ENCODE measurements at regions of chr7 and their contacts with region 1.

Region 1: DNA sequence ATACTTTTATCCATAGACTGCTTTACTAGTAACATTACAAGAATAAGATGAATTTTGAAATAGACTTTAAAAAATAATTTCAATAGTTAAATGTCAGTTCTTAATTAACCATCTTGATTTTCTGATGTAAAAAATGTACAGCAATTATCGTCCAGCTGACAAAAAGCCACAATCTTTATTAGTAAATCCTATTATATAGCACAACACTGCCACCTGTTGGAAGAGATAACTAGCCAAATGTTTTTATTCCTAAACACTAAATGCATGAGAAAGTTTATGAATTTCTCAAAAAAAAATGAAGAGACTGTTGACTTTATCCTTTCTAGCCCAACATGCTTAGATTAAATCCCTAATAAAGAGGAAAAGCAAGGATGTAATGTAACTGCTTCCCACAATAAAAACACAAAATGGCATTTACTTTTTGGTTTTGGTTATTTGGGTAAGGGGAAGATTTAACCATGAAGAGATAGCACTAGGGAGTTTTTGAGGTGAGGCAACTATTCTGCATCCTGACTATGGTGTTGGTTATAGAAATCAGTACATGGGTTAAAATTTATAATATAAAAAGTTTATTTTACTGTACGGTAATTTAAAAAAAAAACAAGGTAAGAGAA is 8.0 kb downstream of the COA1 start:
- DNase-seq: no peak
- ATAC-seq: no peak
- H3K4me3 ChIP-seq: no peak overlapping the region
- H3K27ac ChIP-seq: no peak overlapping the region
- H3K4me1 ChIP-seq: no peaks in the 10 kb centered on the region
- H3K27me3 ChIP-seq: no peaks in the 10 kb centered on the region

Region 2: DNA sequence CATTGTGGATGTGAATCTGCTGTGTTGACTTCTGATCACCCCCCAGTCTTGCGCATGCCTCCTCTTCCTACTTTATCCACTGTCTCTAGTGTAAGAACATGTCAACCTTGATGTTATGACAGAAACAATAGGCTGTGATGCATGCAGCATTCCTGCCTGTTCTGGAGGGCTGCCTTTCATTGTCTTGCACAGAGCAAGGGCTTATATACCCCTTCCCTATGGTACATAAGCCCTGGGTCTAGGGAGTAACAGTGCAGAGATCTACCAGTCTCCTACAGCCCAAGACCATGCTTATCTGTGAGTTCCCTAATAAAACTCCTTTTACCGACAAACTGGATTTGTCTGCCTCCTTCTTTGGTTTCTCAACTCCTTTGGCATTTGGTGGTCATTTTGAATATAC is 315.4 kb before region 1 on chr7:
- intact Hi-C with region 1: no loop called
- DNase-seq: no peak
- ATAC-seq: no peak
- H3K4me3 ChIP-seq: no peak overlapping the region
- H3K27ac ChIP-seq: no peak overlapping the region
- H3K4me1 ChIP-seq: no peaks in the 10 kb centered on the region
- H3K27me3 ChIP-seq: no peaks in the 10 kb centered on the region

Region 3: GRCh38 chr7:43439631-43440401 is 281.5 kb before region 1 on chr7:
- intact Hi-C with region 1: no loop called
- DNase-seq: no peak
- ATAC-seq: no peak
- H3K4me3 ChIP-seq: no peak overlapping the region
- H3K27ac ChIP-seq: no peak overlapping the region
- H3K4me1 ChIP-seq: no peaks in the 10 kb centered on the region
- H3K27me3 ChIP-seq: no peaks in the 10 kb centered on the region

Region 4: GRCh38 chr7:43522406-43523156 is 198.7 kb before region 1 on chr7:
- intact Hi-C with region 1: no loop called
- DNase-seq: no peak
- ATAC-seq: no peak
- H3K4me3 ChIP-seq: no peak overlapping the region
- H3K27ac ChIP-seq: no peak overlapping the region
- H3K4me1 ChIP-seq: no peaks in the 10 kb centered on the region
- H3K27me3 ChIP-seq: no peaks in the 10 kb centered on the region

Region 5: GRCh38 chr7:43700059-43700501 is 21.2 kb before region 1 on chr7:
- intact Hi-C with region 1: loop called in 1 of 2 experiments (anchors 2 kb)
- DNase-seq: no peak
- ATAC-seq: peak; percentile 85
- H3K4me3 ChIP-seq: no peak overlapping the region
- H3K27ac ChIP-seq: no peak overlapping the region
- H3K4me1 ChIP-seq: peaks cover 0 to 4% of the 10 kb centered on the region in 2 donors
- H3K27me3 ChIP-seq: no peaks in the 10 kb centered on the region

Measured in aorta (tissue), 5 donors.